OCI-LY7 (cell line): ENCODE measurements at regions of chr6 and their contacts with region 1.

Region 1: DNA sequence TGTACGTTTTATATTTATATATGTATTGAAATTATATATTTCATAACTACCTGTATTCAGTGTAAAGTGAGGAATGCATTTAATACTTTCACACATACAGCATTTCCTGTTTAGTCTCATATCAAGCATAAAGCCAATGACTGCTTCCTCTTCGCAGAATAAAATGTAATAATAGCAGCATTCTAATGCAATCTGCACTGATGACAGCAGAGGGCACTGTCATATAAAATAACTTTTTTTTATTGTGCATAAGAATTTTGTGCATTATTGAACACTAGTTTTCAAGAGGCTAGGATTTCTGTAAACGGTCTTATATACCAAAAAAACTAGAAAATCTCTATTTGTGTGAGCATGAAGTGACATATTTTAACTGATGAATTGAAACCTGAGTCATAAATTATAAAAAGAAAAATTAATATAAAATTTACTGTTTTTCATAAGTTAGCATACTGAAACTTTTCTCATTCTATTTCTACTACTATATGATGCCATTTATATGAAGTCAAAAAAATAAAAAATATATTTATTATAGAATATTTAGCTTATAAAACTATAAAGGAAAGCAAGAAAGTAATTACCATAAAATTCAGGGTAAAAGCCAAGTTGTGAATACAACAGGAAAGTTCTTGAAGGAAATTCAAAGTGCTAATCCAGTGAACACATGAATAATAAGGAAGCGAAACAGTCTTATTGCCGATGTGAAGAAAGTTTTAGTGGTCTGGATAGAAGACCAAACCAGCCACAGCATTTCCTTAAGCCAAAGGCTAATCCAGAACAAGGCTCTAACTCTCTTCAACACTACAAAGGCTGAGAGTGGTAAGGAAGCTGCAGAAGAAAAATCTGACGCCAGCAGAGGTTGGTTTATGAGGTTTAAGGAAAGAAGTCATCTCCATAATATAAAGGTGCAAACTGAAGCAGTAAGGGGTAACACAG is 36.3 kb downstream of the RNF146 start:
- DNase-seq: peak; percentile 73
- H3K4me3 ChIP-seq: no peak overlapping the region
- H3K27ac ChIP-seq: no peak overlapping the region
- H3K4me1 ChIP-seq: no peaks in the 10 kb centered on the region
- CTCF ChIP-seq: peak; percentile 89

Region 2: GRCh38 chr6:127342946-127343808 is 40.2 kb after region 1 on chr6 and contains the start of gene ECHDC1:
- CTCF ChIA-PET with region 1: no interaction called
- POLR2A ChIA-PET with region 1: interaction called, 4 read pairs
- intact Hi-C with region 1: loop called (anchors 5 kb)
- DNase-seq: peak; percentile 76
- H3K4me3 ChIP-seq: peak within 1 kb of the TSS; percentile 76
- H3K27ac ChIP-seq: peak within 1 kb of the TSS; percentile 17
- H3K4me1 ChIP-seq: peaks cover 20% of the 10 kb centered on the region
- CTCF ChIP-seq: no peak
- total RNA-seq, gene ECHDC1: 18.6 and 20.1 TPM in 2 replicates

Region 3: DNA sequence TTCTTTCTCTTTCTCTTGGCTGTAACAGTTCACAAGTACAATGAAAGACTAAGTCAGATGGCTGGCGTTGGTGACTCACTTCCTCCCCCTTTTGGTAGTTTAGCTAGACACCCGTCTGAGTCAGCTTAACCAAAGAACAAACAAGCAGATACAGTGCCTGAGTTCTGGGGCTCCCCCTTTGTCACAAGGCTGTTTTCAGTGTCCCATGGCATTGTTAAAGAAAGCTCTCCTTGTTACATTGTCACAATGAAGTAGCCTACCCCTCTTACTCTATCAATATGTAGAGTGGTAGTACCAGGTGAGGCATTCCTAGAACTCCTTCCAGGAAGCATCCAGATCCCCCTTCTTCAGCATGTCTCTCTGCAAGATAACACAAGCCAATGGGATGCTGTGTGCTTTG is 117.6 kb after region 1 on chr6:
- CTCF ChIA-PET with region 1: interaction called, 3 read pairs
- POLR2A ChIA-PET with region 1: interaction called, 4 read pairs
- intact Hi-C with region 1: loop called (anchors 2 kb)
- DNase-seq: peak; percentile 42
- H3K4me3 ChIP-seq: no peak overlapping the region
- H3K27ac ChIP-seq: no peak overlapping the region
- H3K4me1 ChIP-seq: no peaks in the 10 kb centered on the region
- CTCF ChIP-seq: peak; percentile 70

Region 4: GRCh38 chr6:127464881-127465459 is 162.0 kb after region 1 on chr6:
- CTCF ChIA-PET with region 1: no interaction called
- POLR2A ChIA-PET with region 1: no interaction called
- intact Hi-C with region 1: loop called (anchors 5 kb)
- DNase-seq: peak; percentile 37
- H3K4me3 ChIP-seq: no peak overlapping the region
- H3K27ac ChIP-seq: no peak overlapping the region
- H3K4me1 ChIP-seq: no peaks in the 10 kb centered on the region
- CTCF ChIP-seq: peak; percentile 85

Region 5: DNA sequence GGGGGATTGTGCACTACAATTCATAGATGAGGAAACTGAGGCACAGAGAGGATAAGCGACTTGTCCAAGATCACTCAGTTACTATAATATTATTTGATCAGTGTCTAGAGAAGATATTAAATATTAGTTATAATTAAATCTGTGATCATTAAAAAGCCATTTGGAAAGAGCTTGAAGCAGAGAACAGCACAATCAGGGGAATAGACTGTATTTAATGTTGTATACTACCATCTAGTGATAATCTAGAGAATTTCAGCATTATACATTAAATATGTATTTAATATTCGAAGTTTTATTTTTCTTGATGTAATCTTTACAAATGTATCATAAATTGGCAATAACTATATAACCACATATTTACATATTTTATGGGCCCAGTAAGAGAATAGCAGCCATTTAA is 236.3 kb after region 1 on chr6:
- CTCF ChIA-PET with region 1: no interaction called
- POLR2A ChIA-PET with region 1: no interaction called
- intact Hi-C with region 1: loop called (anchors 2 kb)
- DNase-seq: peak; percentile 20
- H3K4me3 ChIP-seq: no peak overlapping the region
- H3K27ac ChIP-seq: no peak overlapping the region
- H3K4me1 ChIP-seq: no peaks in the 10 kb centered on the region
- CTCF ChIP-seq: peak; percentile 78